Dendritic cell treated with granulocyte-macrophage colony-stimulating factor and Interleukin-4, amounts not matched to agents 40 ng/mL and 50 ng/mL, for 4 days (primary cell): ENCODE measurements at regions of chr4 and their contacts with region 1.

Region 1: GRCh38 chr4:152500800-152501434 is 35.0 kb downstream of the FBXW7 start:
- H3K4me3 Mint-ChIP-seq: no peak overlapping the region
- H3K27ac Mint-ChIP-seq: no peak overlapping the region
- H3K4me1 Mint-ChIP-seq: peaks cover 20% of the 10 kb centered on the region
- H3K27me3 Mint-ChIP-seq: no peaks in the 10 kb centered on the region

Region 2: DNA sequence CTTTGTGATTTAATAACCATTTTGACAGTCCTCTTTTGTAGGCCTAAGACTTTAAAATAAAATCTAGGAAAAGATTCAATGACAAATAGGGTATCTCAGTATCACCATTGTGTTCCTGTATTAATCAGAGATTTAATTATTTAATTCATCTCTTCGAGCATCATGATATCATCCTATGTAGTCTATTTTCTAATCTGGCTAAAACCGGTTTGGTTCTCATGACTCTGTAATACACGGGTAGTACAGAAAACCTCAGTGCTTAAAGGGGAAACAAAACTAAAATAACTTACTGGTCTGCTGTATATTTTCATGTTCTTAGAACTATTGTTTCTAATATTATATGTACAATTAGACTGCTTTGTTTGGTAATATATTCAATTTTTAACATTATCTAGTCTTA is 58.7 kb after region 1 on chr4:
- intact Hi-C with region 1: loop called (anchors 10 kb)
- H3K4me3 Mint-ChIP-seq: no peak overlapping the region
- H3K27ac Mint-ChIP-seq: no peak overlapping the region
- H3K4me1 Mint-ChIP-seq: no peaks in the 10 kb centered on the region
- H3K27me3 Mint-ChIP-seq: no peaks in the 10 kb centered on the region

Region 3: DNA sequence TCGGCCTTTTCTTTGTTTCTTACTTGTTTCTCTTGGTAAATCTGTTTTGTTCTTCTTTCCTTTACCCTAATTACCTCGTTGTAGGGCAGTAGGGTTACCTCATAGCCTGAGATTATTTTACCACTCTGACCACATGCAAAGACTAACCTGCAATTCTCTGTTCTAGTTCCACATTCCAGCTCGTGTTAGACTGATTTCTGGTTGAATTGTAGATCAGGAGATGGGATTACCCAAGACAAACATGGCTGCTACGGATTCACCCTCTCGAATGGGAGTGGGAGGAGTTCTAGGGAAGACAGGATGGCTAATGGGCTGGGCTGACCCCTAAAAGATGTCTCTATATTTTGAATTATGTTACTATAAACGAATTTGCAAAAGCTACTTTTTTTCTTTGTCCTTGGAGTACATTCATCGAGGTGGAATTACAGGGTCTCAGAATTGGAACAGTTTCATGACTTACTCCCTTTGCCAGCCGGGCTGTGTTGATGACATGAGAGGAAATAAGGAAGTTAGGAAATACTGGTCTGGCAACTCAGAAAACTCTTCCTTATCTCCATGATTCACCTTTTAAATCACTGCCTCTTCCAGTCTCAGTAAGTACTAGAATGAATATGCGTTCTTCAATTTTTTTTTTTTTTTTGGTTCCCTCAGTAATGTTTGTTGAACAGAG is 71.6 kb after region 1 on chr4:
- intact Hi-C with region 1: no loop called
- H3K4me3 Mint-ChIP-seq: no peak overlapping the region
- H3K27ac Mint-ChIP-seq: no peak overlapping the region
- H3K4me1 Mint-ChIP-seq: peaks cover 19% of the 10 kb centered on the region
- H3K27me3 Mint-ChIP-seq: peaks cover 3% of the 10 kb centered on the region